Sigmoid colon (tissue), 7 donors: ENCODE measurements at regions of chr16 and their contacts with region 1.

Region 1: GRCh38 chr16:49112754-49113153 is 168.9 kb downstream of the CBLN1 start:
- DNase-seq: peak; percentile 85
- H3K4me3 ChIP-seq: no peak overlapping the region
- H3K27ac ChIP-seq: peak overlapping the region in 3 of 4 donors; percentile 52 to 66 (median 60)
- H3K4me1 ChIP-seq: peaks cover 0 to 30% (median 22%) of the 10 kb centered on the region in 4 donors
- H3K27me3 ChIP-seq: no peaks in the 10 kb centered on the region
- CTCF ChIP-seq: no peak
- EP300 ChIP-seq: peak; percentile 40 to 92 (median 71)
- POLR2A ChIP-seq: no peak

Region 2: DNA sequence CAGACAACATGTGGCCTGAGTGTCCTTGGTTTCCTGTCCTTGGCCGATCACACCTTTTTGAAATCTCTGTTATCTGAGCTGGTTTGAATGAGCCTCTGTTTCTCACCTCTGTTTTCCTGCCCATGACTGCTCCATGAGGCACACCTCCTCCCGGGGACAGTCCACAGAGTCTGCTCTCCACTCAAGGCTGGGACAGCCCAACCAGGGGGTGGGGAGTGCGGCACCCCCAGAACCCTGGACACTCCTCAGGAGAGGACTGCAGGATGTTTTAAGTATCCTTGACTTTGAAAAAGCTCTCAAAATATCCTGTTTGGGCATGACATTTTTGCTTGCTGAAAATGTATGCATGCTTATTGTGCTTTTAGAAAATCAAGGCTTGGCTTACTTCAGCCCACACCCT is 169.8 kb before region 1 on chr16:
- intact Hi-C with region 1: loop called (anchors 5 kb)
- DNase-seq: no peak
- H3K4me3 ChIP-seq: no peak overlapping the region
- H3K27ac ChIP-seq: no peak overlapping the region
- H3K4me1 ChIP-seq: peaks cover 0 to 35% (median 24%) of the 10 kb centered on the region in 4 donors
- H3K27me3 ChIP-seq: no peaks in the 10 kb centered on the region
- CTCF ChIP-seq: no peak
- EP300 ChIP-seq: no peak
- POLR2A ChIP-seq: no peak